Activated CD4-positive, alpha-beta T cell treated with anti-CD3 and anti-CD28 coated beads, Interleukin-2, amount 10 ng/mL, durations not matched to agents 7 days and 5 days (primary cell): ENCODE measurements at regions of chr5 and their contacts with region 1.

Region 1: GRCh38 chr5:175534070-175534932 is 55.9 kb downstream of the SFXN1 start:
- DNase-seq: peak; percentile 87
- H3K4me3 Mint-ChIP-seq: no peak overlapping the region
- H3K27ac Mint-ChIP-seq: peak overlapping the region; percentile 46
- H3K4me1 Mint-ChIP-seq: peaks cover 45% of the 10 kb centered on the region
- H3K27me3 Mint-ChIP-seq: no peaks in the 10 kb centered on the region

Region 2: GRCh38 chr5:175444060-175444904 is 90.0 kb before region 1 on chr5 and contains the start of gene DRD1:
- CTCF ChIA-PET with region 1: no interaction called
- POLR2A ChIA-PET with region 1: no interaction called
- DNase-seq: peak; percentile 33
- H3K4me3 Mint-ChIP-seq: no peak within 1 kb of the TSS
- H3K27ac Mint-ChIP-seq: no peak within 1 kb of the TSS
- H3K4me1 Mint-ChIP-seq: peaks cover 6% of the 10 kb centered on the region
- H3K27me3 Mint-ChIP-seq: peaks cover 78% of the 10 kb centered on the region
- total RNA-seq, gene DRD1: not detected

Region 3: GRCh38 chr5:175548626-175549311 is 14.5 kb after region 1 on chr5:
- CTCF ChIA-PET with region 1: interaction called, 25 read pairs
- POLR2A ChIA-PET with region 1: no interaction called
- DNase-seq: no peak
- H3K4me3 Mint-ChIP-seq: no peak overlapping the region
- H3K27ac Mint-ChIP-seq: no peak overlapping the region
- H3K4me1 Mint-ChIP-seq: peaks cover 2% of the 10 kb centered on the region
- H3K27me3 Mint-ChIP-seq: peaks cover 24% of the 10 kb centered on the region

Region 4: GRCh38 chr5:175614223-175614815 is 80.0 kb after region 1 on chr5:
- CTCF ChIA-PET with region 1: interaction called, 11 read pairs
- POLR2A ChIA-PET with region 1: no interaction called
- DNase-seq: no peak
- H3K4me3 Mint-ChIP-seq: no peak overlapping the region
- H3K27ac Mint-ChIP-seq: no peak overlapping the region
- H3K4me1 Mint-ChIP-seq: peaks cover 14% of the 10 kb centered on the region
- H3K27me3 Mint-ChIP-seq: peaks cover 2% of the 10 kb centered on the region

Region 5: DNA sequence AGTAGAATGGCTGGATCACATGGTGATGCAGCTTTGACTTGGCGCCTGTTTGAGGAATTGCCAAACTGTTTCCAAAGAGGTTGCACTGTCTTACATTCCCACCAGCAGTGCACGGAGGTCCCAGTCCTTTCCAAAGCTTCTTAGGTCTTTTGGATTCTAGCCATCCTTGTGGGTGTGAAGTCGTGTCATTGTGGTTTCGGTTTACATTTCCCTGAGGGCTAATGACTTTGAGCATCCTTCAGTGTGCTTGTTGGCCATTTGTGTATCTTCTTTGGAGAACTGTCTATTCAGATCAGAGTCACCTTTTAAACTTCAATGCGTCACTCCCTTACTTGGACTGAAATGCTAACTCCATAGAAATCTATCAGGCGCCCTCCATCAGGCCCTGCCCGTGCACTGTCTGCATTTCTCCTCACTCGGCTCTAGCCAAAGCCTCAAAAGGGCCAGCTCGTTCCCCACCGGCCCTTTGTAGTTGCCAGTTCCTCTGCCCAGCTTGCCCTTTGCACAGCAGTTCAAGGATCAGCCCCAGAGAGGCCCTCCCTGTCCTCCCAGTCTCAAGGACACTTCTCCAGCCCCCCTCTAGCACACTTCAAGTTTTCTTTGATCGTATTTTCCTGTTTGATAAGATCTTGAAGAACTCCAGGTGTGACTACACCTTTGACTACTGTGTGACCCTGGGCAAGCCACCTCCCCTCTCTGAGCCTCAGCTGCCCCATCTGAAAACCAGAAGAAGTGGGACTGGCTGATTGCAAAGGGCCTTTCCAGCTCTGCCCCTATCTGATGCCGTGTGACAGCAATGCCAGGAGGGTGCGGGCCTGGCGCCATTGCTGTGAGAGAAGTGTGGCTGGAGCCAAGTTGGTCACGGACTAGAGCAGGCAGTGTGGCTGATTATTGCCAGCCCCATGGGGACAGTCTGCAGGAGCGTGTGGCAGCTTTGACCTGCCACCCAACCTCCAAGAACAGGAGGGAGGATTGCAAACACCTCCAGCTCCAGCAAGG is 129.2 kb after region 1 on chr5:
- CTCF ChIA-PET with region 1: interaction called, 10 read pairs
- POLR2A ChIA-PET with region 1: no interaction called
- DNase-seq: no peak
- H3K4me3 Mint-ChIP-seq: no peak overlapping the region
- H3K27ac Mint-ChIP-seq: no peak overlapping the region
- H3K4me1 Mint-ChIP-seq: peaks cover 66% of the 10 kb centered on the region
- H3K27me3 Mint-ChIP-seq: no peaks in the 10 kb centered on the region

Region 6: GRCh38 chr5:175696139-175696854 is 162.0 kb after region 1 on chr5:
- CTCF ChIA-PET with region 1: interaction called, 63 read pairs
- POLR2A ChIA-PET with region 1: no interaction called
- DNase-seq: peak; percentile 81
- H3K4me3 Mint-ChIP-seq: peak overlapping the region; percentile 1
- H3K27ac Mint-ChIP-seq: peak overlapping the region; percentile 47
- H3K4me1 Mint-ChIP-seq: peaks cover 40% of the 10 kb centered on the region
- H3K27me3 Mint-ChIP-seq: no peaks in the 10 kb centered on the region

Region 7: DNA sequence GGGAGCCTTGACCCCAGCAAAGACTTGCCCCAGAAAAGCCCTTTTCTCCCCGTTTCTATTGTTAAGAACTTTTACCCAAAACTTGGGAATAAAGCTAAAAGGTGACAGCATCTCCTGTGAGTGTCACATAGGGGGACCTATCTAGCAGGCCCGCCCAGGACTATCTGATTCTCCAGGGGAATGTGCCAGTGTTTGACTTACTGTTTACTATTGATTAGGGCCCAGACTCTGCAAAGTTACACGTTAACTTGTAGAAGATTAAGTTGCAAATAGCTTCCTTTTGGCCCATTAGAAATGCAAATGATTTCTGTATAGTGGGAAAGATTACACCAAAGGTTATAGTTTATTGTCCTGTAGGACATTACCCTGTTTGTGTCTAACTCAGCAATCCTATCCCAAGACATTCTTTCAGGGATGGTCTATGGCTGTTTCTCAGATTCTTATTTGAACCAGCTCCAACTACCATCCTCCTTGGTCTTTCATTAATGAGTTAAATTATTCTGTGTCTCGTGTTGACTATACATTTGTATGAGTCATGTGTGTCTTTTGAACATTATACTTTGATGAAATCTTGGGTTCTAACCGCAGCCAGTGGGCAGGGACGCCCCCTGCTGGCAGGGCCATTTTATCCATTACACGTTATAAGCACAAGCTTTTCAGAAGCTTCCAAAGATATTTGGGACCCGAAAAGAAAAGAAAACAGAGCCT is 184.3 kb after region 1 on chr5:
- CTCF ChIA-PET with region 1: interaction called, 56 read pairs
- POLR2A ChIA-PET with region 1: no interaction called
- DNase-seq: peak; percentile 68
- H3K4me3 Mint-ChIP-seq: no peak overlapping the region
- H3K27ac Mint-ChIP-seq: no peak overlapping the region
- H3K4me1 Mint-ChIP-seq: peaks cover 4% of the 10 kb centered on the region
- H3K27me3 Mint-ChIP-seq: no peaks in the 10 kb centered on the region